Esophagus muscularis mucosa (tissue), 4 donors: ENCODE measurements at regions of chr1 and their contacts with region 1.

Region 1: GRCh38 chr1:157992031-157992832 is 1.2 kb upstream of the KIRREL1 start:
- DNase-seq: no peak
- H3K4me3 ChIP-seq: peak overlapping the region in 2 of 4 donors; percentile 69 to 94
- H3K27ac ChIP-seq: peak overlapping the region; percentile 85 to 95 (median 94)
- H3K4me1 ChIP-seq: peaks cover 24 to 50% (median 48%) of the 10 kb centered on the region in 4 donors
- H3K27me3 ChIP-seq: peaks cover 0 to 8% (median 0%) of the 10 kb centered on the region in 4 donors
- CTCF ChIP-seq: peak; percentile 91 to 97 (median 93)
- EP300 ChIP-seq: no peak
- POLR2A ChIP-seq: no peak

Region 2: GRCh38 chr1:158087320-158087927 is 95.2 kb after region 1 on chr1:
- intact Hi-C with region 1: loop called (anchors 2 kb)
- DNase-seq: no peak
- H3K4me3 ChIP-seq: no peak overlapping the region
- H3K27ac ChIP-seq: no peak overlapping the region
- H3K4me1 ChIP-seq: no peaks in the 10 kb centered on the region
- H3K27me3 ChIP-seq: no peaks in the 10 kb centered on the region
- CTCF ChIP-seq: peak; percentile 80 to 88 (median 83)
- EP300 ChIP-seq: no peak
- POLR2A ChIP-seq: no peak